Activated CD4-positive, alpha-beta T cell treated with anti-CD3 and anti-CD28 coated beads for 36 hours (primary cell): ENCODE measurements at regions of chr7 and their contacts with region 1.

Region 1: GRCh38 chr7:141737834-141738591 is at the start of gene SSBP1:
- DNase-seq: peak; percentile 95
- ATAC-seq: peak; percentile 89
- H3K4me3 Mint-ChIP-seq: peak within 1 kb of the TSS; percentile 96
- H3K27ac Mint-ChIP-seq: peak within 1 kb of the TSS; percentile 97
- H3K4me1 Mint-ChIP-seq: peaks cover 40% of the 10 kb centered on the region
- H3K27me3 Mint-ChIP-seq: no peaks in the 10 kb centered on the region
- total RNA-seq, gene SSBP1: 183 to 245 TPM

Region 2: DNA sequence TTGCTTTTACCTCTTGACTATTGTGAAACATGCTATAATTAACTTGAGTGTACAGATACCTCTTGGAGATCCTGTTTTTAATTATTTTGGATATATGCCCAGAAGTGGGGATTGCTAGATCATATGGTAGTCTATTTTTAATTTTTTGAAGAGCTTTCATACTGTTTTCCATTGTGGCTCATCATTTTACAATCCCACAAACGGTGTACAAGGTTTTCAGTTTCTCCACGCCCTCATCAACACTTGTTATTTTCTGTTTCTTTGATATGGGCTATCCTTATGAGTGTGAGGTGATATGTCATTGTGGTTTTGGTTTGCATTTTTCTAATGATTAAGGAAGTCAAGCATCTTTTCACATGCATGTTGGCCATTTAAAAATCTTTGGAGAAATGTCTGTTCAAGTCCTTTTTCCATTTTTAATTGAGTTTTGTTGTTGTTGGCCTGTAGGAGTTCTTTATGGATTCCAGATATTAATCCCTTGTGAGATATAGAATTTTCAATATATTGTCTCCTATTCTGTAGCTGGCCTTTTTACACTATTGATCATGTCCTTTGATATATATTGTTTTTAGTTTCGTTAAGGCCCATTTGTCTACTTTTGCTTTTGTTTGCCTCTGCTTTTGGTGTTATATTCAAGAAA is 179.3 kb before region 1 on chr7:
- CTCF ChIA-PET with region 1: interaction called, 5 read pairs
- POLR2A ChIA-PET with region 1: no interaction called
- intact Hi-C with region 1: loop called in 1 of 2 experiments (anchors 2 kb)
- DNase-seq: no peak
- ATAC-seq: peak; percentile 94
- H3K4me3 Mint-ChIP-seq: no peak overlapping the region
- H3K27ac Mint-ChIP-seq: peak overlapping the region; percentile 65
- H3K4me1 Mint-ChIP-seq: peaks cover 64% of the 10 kb centered on the region
- H3K27me3 Mint-ChIP-seq: no peaks in the 10 kb centered on the region

Region 3: GRCh38 chr7:141701489-141702046 is 36.4 kb before region 1 on chr7:
- CTCF ChIA-PET with region 1: interaction called, 34 read pairs
- POLR2A ChIA-PET with region 1: interaction called, 3 read pairs
- intact Hi-C with region 1: loop called (anchors 1 kb)
- DNase-seq: peak; percentile 82
- ATAC-seq: peak; percentile 84
- H3K4me3 Mint-ChIP-seq: peak overlapping the region; percentile 77
- H3K27ac Mint-ChIP-seq: peak overlapping the region; percentile 56
- H3K4me1 Mint-ChIP-seq: peaks cover 47% of the 10 kb centered on the region
- H3K27me3 Mint-ChIP-seq: no peaks in the 10 kb centered on the region

Region 4: DNA sequence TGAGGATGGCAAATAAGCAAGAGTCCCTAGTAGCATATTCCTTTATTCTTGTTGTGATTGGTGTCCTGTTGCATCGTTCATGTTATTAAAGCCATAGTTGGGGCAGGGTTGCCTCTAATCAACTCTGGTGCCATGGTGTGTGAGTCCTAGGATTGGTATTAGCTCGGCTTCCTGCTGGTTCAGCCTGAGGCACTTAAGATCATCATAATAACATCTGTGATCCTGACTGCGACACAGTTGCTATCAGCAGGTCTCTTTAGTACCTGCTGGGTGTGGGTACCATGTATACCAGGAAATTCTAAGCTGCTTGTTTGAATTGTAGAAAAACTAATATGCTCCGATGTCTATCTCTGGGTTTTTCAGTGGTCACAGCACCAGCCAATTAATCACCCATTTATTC is 28.3 kb before region 1 on chr7:
- CTCF ChIA-PET with region 1: interaction called, 14 read pairs
- POLR2A ChIA-PET with region 1: no interaction called
- intact Hi-C with region 1: no loop called
- DNase-seq: no peak
- ATAC-seq: no peak
- H3K4me3 Mint-ChIP-seq: no peak overlapping the region
- H3K27ac Mint-ChIP-seq: no peak overlapping the region
- H3K4me1 Mint-ChIP-seq: peaks cover 8% of the 10 kb centered on the region
- H3K27me3 Mint-ChIP-seq: no peaks in the 10 kb centered on the region

Region 5: GRCh38 chr7:141872931-141873330 is 134.9 kb after region 1 on chr7:
- CTCF ChIA-PET with region 1: no interaction called
- POLR2A ChIA-PET with region 1: no interaction called
- intact Hi-C with region 1: no loop called
- DNase-seq: no peak
- ATAC-seq: no peak
- H3K4me3 Mint-ChIP-seq: no peak overlapping the region
- H3K27ac Mint-ChIP-seq: no peak overlapping the region
- H3K4me1 Mint-ChIP-seq: no peaks in the 10 kb centered on the region
- H3K27me3 Mint-ChIP-seq: no peaks in the 10 kb centered on the region

Region 6: GRCh38 chr7:141884539-141885225 is 146.7 kb after region 1 on chr7:
- CTCF ChIA-PET with region 1: no interaction called
- POLR2A ChIA-PET with region 1: no interaction called
- intact Hi-C with region 1: no loop called
- DNase-seq: no peak
- ATAC-seq: peak; percentile 69
- H3K4me3 Mint-ChIP-seq: no peak overlapping the region
- H3K27ac Mint-ChIP-seq: no peak overlapping the region
- H3K4me1 Mint-ChIP-seq: peaks cover 2% of the 10 kb centered on the region
- H3K27me3 Mint-ChIP-seq: peaks cover 4% of the 10 kb centered on the region

Region 7: DNA sequence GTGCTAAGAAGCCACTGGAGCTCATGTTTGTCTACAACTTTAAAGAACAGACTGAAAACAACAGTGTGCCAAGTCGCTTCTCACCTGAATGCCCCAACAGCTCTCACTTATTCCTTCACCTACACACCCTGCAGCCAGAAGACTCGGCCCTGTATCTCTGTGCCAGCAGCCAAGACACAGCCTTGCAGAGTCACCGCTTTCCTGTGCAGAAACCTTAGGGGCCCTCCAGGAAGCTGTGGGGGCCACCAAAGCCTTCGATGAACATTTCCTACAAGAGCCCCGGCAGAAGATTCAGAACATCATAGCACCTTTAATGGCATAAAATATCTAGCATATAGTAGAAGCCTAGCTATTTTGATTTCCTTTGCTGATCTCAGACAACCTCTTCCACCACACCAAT is 607.8 kb after region 1 on chr7:
- CTCF ChIA-PET with region 1: no interaction called
- POLR2A ChIA-PET with region 1: no interaction called
- intact Hi-C with region 1: no loop called
- DNase-seq: no peak
- ATAC-seq: peak; percentile 12
- H3K4me3 Mint-ChIP-seq: peak overlapping the region; percentile 22
- H3K27ac Mint-ChIP-seq: no peak overlapping the region
- H3K4me1 Mint-ChIP-seq: no peaks in the 10 kb centered on the region
- H3K27me3 Mint-ChIP-seq: peaks cover 7% of the 10 kb centered on the region